ENCODE measurements at regions of chr6 and their contacts with region 1.

Region 1: DNA sequence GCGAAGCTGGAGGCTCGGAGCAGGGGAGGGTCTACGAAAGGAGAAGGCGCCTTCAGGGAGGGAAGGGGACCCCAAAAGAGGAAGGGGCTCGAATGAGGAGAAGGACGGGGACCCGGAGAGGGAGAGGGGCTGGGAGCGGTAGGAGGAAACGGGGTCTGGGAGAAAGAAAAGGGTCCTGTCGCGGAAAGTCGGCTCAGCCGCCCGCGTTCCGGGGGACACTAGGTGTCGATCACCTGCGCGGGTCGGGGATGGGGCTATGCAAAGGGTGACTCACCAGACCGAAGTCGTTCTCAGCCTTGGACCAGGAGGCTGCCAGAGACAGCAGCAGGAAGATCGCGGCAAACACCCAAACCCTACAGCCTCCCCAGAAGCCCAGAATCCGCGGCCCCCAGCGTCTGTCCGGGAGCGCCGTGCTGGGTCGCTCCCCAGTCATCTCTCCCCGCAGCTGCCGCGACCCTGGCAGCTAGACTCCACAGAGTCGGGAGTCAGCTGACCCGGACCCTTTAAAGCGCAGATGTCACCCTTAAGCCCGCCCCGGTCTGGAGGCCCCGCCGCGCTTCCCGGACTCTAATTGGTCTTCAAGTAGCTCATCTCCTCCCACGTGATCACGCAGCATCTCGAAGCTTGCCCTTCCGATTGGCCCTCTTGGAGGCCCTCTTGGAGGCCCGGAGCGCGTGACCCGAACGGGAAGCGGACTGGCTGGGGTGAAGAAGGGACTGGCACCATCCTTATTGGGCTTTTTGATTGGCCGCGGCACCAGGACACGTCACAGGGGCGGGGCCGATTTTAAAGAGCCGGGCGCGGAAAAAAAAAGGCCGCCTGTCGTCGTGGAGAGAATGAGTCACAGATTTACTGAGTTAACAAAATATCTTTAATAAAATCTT is at the start of gene NEU1:
- DNase-seq: peak; percentile 100
- ATAC-seq: peak; percentile 90
- H3K4me3 ChIP-seq: peak within 1 kb of the TSS; percentile 69 to 92 (median 85)
- H3K4me3 Mint-ChIP-seq: peak within 1 kb of the TSS; percentile 94
- H3K27ac ChIP-seq: peak within 1 kb of the TSS; percentile 77 to 91
- H3K27ac Mint-ChIP-seq: peak within 1 kb of the TSS; percentile 92
- H3K4me1 ChIP-seq: peaks cover 18 to 23% of the 10 kb centered on the region in 2 donors
- H3K4me1 Mint-ChIP-seq: peaks cover 24% of the 10 kb centered on the region
- H3K27me3 ChIP-seq: no peaks in the 10 kb centered on the region
- H3K27me3 Mint-ChIP-seq: no peaks in the 10 kb centered on the region
- CTCF ChIP-seq: no peak
- total RNA-seq, gene NEU1: 25.3 and 26.0 TPM in 2 replicates

Region 2: GRCh38 chr6:31493875-31494694 is 368.5 kb before region 1 on chr6:
- CTCF ChIA-PET with region 1: no interaction called
- POLR2A ChIA-PET with region 1: no interaction called
- intact Hi-C with region 1: loop called (anchors 10 kb)
- DNase-seq: peak; percentile 89
- ATAC-seq: peak; percentile 47
- H3K4me3 ChIP-seq: peak overlapping the region; percentile 76 to 91 (median 85)
- H3K4me3 Mint-ChIP-seq: peak overlapping the region; percentile 83
- H3K27ac ChIP-seq: peak overlapping the region; percentile 74 to 80
- H3K27ac Mint-ChIP-seq: peak overlapping the region; percentile 89
- H3K4me1 ChIP-seq: peaks cover 42 to 54% of the 10 kb centered on the region in 2 donors
- H3K4me1 Mint-ChIP-seq: peaks cover 46% of the 10 kb centered on the region
- H3K27me3 ChIP-seq: no peaks in the 10 kb centered on the region
- H3K27me3 Mint-ChIP-seq: no peaks in the 10 kb centered on the region
- CTCF ChIP-seq: peak; percentile 88

Region 3: DNA sequence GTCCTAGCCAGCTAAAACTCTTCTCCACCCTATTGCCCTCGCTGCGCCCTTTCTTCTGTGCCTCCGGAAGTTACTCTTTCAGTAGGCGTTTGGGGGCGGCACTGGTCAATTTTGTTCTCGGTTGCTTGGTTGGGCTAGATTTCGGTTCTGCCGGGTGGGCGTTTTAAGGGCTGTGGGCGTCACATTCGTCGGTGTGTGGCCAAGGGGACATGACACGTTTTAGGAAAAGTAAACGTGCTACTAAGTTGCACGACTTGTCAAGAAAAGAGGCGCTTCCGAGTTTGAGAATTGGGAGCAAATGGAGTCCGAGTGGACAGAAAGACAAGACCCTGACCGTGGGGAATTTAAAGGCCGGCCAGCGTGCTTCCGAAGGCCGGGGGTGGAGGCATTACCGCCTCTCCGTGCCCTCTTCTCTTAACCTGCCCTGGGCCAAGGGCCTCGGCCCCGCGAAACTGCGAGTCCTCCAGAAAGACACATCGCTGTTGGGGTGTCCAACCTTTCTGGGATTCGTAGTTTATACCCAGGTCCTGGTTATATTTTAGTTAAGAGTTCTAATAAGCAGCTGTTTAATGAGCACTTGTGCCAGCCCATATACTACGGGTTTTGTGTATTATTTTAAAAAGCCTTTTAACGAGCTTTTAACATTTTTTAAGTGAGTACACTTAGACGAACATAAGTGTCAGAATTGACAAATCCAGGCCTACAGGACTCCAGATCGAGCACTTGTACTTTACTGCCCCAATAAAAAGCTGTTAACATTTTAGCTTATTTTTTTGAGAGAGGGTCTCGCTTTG is 209.5 kb before region 1 on chr6:
- CTCF ChIA-PET with region 1: no interaction called
- POLR2A ChIA-PET with region 1: interaction called, 3 read pairs
- intact Hi-C with region 1: loop called (anchors 1 kb)
- DNase-seq: no peak
- ATAC-seq: peak; percentile 69
- H3K4me3 ChIP-seq: peak overlapping the region; percentile 66 to 96 (median 86)
- H3K4me3 Mint-ChIP-seq: peak overlapping the region; percentile 98
- H3K27ac ChIP-seq: peak overlapping the region; percentile 97 to 98
- H3K27ac Mint-ChIP-seq: peak overlapping the region; percentile 100
- H3K4me1 ChIP-seq: peaks cover 22 to 29% of the 10 kb centered on the region in 2 donors
- H3K4me1 Mint-ChIP-seq: peaks cover 48% of the 10 kb centered on the region
- H3K27me3 ChIP-seq: no peaks in the 10 kb centered on the region
- H3K27me3 Mint-ChIP-seq: no peaks in the 10 kb centered on the region
- CTCF ChIP-seq: no peak

Region 4: DNA sequence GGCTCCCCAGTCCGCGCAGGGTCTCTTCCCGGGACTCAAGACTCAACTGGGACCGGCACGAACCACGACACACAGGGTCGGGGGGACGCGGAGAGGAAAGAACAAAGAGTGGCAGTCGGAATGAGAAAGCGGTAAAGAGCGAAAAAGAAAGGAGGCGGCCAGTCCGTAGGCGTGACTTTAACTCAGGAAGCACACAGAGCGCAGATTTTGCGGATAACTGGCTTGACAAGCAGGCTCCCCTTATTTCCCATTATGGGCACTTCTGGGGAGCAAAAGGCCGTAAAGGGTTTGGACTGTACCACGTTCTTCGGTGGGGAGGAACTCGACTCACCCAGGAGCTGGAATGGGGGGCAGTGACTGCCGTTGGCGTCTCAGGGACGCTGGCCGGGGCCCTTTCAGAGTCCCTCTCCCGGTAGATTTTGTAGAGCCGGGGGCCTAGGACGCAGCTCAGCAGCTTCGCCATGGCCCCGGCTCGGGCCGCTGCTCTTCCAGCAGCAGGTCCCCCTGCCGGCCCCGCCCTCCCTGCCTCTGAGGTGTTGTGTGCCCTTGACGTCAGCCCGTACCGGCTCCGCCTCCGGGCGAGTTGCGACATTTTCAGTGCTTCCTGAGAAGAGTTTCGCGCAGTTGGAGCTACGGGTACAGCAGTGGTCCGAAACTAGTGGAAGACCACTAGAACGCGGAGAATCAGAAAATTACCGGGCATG is 159.6 kb before region 1 on chr6 and contains the start of gene ABHD16A:
- CTCF ChIA-PET with region 1: no interaction called
- POLR2A ChIA-PET with region 1: interaction called, 3 read pairs
- intact Hi-C with region 1: loop called (anchors 1 kb)
- DNase-seq: peak; percentile 99
- ATAC-seq: peak; percentile 95
- H3K4me3 ChIP-seq: peak within 1 kb of the TSS; percentile 65 to 98 (median 96)
- H3K4me3 Mint-ChIP-seq: peak within 1 kb of the TSS; percentile 98
- H3K27ac ChIP-seq: peak within 1 kb of the TSS; percentile 87 to 93
- H3K27ac Mint-ChIP-seq: peak within 1 kb of the TSS; percentile 91
- H3K4me1 ChIP-seq: peaks cover 20 to 28% of the 10 kb centered on the region in 2 donors
- H3K4me1 Mint-ChIP-seq: peaks cover 32% of the 10 kb centered on the region
- H3K27me3 ChIP-seq: no peaks in the 10 kb centered on the region
- H3K27me3 Mint-ChIP-seq: no peaks in the 10 kb centered on the region
- CTCF ChIP-seq: no peak
- total RNA-seq, gene ABHD16A: 78.3 and 90.3 TPM in 2 replicates

Region 5: GRCh38 chr6:31795616-31796298 is 66.8 kb before region 1 on chr6 and contains the start of gene VARS1:
- CTCF ChIA-PET with region 1: interaction called, 3 read pairs
- POLR2A ChIA-PET with region 1: no interaction called
- intact Hi-C with region 1: loop called (anchors 5 kb)
- DNase-seq: peak; percentile 96
- ATAC-seq: peak; percentile 91
- H3K4me3 ChIP-seq: peak within 1 kb of the TSS; percentile 72 to 96 (median 95)
- H3K4me3 Mint-ChIP-seq: peak within 1 kb of the TSS; percentile 97
- H3K27ac ChIP-seq: peak within 1 kb of the TSS; percentile 75 to 87
- H3K27ac Mint-ChIP-seq: peak within 1 kb of the TSS; percentile 99
- H3K4me1 ChIP-seq: peaks cover 45 to 59% of the 10 kb centered on the region in 2 donors
- H3K4me1 Mint-ChIP-seq: peaks cover 54% of the 10 kb centered on the region
- H3K27me3 ChIP-seq: no peaks in the 10 kb centered on the region
- H3K27me3 Mint-ChIP-seq: no peaks in the 10 kb centered on the region
- CTCF ChIP-seq: peak; percentile 79
- total RNA-seq, gene VARS1: 47.4 and 52.3 TPM in 2 replicates

Region 6: GRCh38 chr6:31834434-31835198 is 28.0 kb before region 1 on chr6:
- CTCF ChIA-PET with region 1: interaction called, 29 read pairs
- POLR2A ChIA-PET with region 1: interaction called, 15 read pairs
- intact Hi-C with region 1: loop called (anchors 1 kb)
- DNase-seq: peak; percentile 91
- ATAC-seq: peak; percentile 61
- H3K4me3 ChIP-seq: peak overlapping the region; percentile 85 to 95 (median 90)
- H3K4me3 Mint-ChIP-seq: peak overlapping the region; percentile 87
- H3K27ac ChIP-seq: peak overlapping the region; percentile 97 to 98
- H3K27ac Mint-ChIP-seq: peak overlapping the region; percentile 92
- H3K4me1 ChIP-seq: peaks cover 44 to 75% of the 10 kb centered on the region in 2 donors
- H3K4me1 Mint-ChIP-seq: peaks cover 56% of the 10 kb centered on the region
- H3K27me3 ChIP-seq: no peaks in the 10 kb centered on the region
- H3K27me3 Mint-ChIP-seq: no peaks in the 10 kb centered on the region
- CTCF ChIP-seq: no peak

Region 7: GRCh38 chr6:31905041-31905440 is 42.5 kb after region 1 on chr6:
- CTCF ChIA-PET with region 1: no interaction called
- POLR2A ChIA-PET with region 1: no interaction called
- intact Hi-C with region 1: no loop called
- DNase-seq: no peak
- ATAC-seq: no peak
- H3K4me3 ChIP-seq: no peak overlapping the region
- H3K4me3 Mint-ChIP-seq: no peak overlapping the region
- H3K27ac ChIP-seq: no peak overlapping the region
- H3K27ac Mint-ChIP-seq: no peak overlapping the region
- H3K4me1 ChIP-seq: peaks cover 7 to 11% of the 10 kb centered on the region in 2 donors
- H3K4me1 Mint-ChIP-seq: peaks cover 12% of the 10 kb centered on the region
- H3K27me3 ChIP-seq: no peaks in the 10 kb centered on the region
- H3K27me3 Mint-ChIP-seq: peaks cover 4% of the 10 kb centered on the region
- CTCF ChIP-seq: no peak

Region 8: DNA sequence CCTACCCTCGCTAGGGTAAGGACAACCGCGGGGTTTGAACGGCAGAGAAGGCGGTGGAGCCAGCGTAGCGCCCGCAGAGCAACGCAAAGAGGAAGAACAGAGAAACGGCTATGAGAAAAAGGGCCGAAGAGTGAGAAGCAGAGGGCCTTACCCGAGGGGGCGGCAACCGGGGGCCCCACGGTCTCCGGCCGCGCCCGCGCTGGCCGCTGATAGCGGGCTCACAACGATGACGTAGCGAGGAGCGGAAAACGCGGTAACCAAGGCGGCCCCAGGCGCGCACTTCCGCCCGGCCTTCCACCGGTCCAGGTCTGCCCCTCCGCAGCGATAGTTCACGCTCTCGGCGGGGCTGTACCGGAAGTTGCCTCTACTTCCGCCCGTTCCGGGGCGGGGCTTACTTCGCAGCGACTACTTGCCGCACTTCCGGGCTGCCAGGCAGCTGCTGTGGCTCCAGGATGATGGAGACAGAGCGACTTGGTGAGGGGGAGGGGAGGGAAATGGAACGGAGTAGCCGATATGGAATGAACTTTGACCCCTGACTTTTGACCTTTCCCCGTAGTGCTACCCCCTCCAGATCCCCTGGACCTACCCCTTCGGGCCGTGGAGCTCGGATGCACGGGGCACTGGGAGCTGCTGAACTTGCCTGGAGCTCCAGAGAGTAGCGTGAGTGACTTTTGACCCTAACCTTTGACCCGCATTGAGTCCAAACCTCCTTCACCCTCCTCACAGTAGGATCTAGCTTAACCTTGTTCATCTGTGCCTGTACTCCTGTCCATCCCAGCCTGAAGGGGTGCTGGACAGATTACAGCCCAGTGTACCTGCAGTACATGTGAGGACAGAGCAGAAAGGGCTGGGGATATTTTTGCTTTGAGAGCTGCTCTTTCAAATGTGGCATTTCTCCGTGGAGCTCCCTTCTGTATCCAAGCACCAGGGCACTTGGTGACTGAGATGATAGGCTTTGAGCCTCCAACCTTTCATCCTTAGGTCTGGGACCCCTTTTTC is 96.5 kb after region 1 on chr6 and contains the starts of genes NELFE and SKIC2:
- CTCF ChIA-PET with region 1: interaction called, 4 read pairs
- POLR2A ChIA-PET with region 1: interaction called, 3 read pairs
- intact Hi-C with region 1: loop called (anchors 1 kb)
- DNase-seq: peak; percentile 99
- ATAC-seq: peak; percentile 98
- H3K4me3 ChIP-seq: peak within 1 kb of the TSS; percentile 88 to 98 (median 91)
- H3K4me3 Mint-ChIP-seq: peak within 1 kb of the TSS; percentile 96
- H3K27ac ChIP-seq: peak within 1 kb of the TSS; percentile 84 to 91
- H3K27ac Mint-ChIP-seq: peak within 1 kb of the TSS; percentile 96
- H3K4me1 ChIP-seq: peaks cover 16 to 23% of the 10 kb centered on the region in 2 donors
- H3K4me1 Mint-ChIP-seq: peaks cover 30% of the 10 kb centered on the region
- H3K27me3 ChIP-seq: no peaks in the 10 kb centered on the region
- H3K27me3 Mint-ChIP-seq: no peaks in the 10 kb centered on the region
- CTCF ChIP-seq: no peak
- total RNA-seq, gene NELFE: 48.6 and 53.7 TPM in 2 replicates
- total RNA-seq, gene SKIC2: 119 and 122 TPM in 2 replicates

Region 9: GRCh38 chr6:32076321-32076809 is 213.8 kb after region 1 on chr6:
- CTCF ChIA-PET with region 1: no interaction called
- POLR2A ChIA-PET with region 1: no interaction called
- intact Hi-C with region 1: no loop called
- DNase-seq: no peak
- ATAC-seq: no peak
- H3K4me3 ChIP-seq: no peak overlapping the region
- H3K4me3 Mint-ChIP-seq: no peak overlapping the region
- H3K27ac ChIP-seq: no peak overlapping the region
- H3K27ac Mint-ChIP-seq: no peak overlapping the region
- H3K4me1 ChIP-seq: no peaks in the 10 kb centered on the region
- H3K4me1 Mint-ChIP-seq: no peaks in the 10 kb centered on the region
- H3K27me3 ChIP-seq: no peaks in the 10 kb centered on the region
- H3K27me3 Mint-ChIP-seq: peaks cover 24% of the 10 kb centered on the region
- CTCF ChIP-seq: no peak

Region 10: DNA sequence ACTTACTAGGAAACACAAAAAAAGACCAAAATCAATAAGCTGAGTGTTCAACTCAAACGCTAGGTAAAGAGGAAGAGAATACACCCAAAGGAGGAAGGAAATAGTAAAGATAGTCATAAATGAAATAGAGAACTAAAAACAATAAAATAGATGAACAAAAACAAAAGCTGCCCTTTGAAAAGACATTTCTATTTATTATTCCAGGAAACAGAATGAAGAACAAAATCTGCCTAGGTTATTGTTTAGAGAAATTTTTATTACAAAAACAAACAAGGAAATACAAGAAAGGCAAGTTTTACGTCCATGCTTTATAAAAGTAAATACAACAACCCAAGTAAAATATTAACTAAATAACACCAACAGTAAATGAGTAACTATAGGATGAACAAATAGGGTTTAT is 1058.1 kb after region 1 on chr6:
- CTCF ChIA-PET with region 1: no interaction called
- POLR2A ChIA-PET with region 1: no interaction called
- intact Hi-C with region 1: no loop called
- DNase-seq: peak; percentile 44
- ATAC-seq: peak; percentile 51
- H3K4me3 ChIP-seq: peak overlapping the region in 2 of 5 experiments; percentile 18 to 47
- H3K4me3 Mint-ChIP-seq: peak overlapping the region; percentile 21
- H3K27ac ChIP-seq: peak overlapping the region; percentile 21 to 58
- H3K27ac Mint-ChIP-seq: peak overlapping the region; percentile 57
- H3K4me1 ChIP-seq: peaks cover 33 to 57% of the 10 kb centered on the region in 2 donors
- H3K4me1 Mint-ChIP-seq: peaks cover 65% of the 10 kb centered on the region
- H3K27me3 ChIP-seq: no peaks in the 10 kb centered on the region
- H3K27me3 Mint-ChIP-seq: no peaks in the 10 kb centered on the region
- CTCF ChIP-seq: no peak